ENCODE measurements at regions of chr16 and their contacts with region 1.

Region 1: DNA sequence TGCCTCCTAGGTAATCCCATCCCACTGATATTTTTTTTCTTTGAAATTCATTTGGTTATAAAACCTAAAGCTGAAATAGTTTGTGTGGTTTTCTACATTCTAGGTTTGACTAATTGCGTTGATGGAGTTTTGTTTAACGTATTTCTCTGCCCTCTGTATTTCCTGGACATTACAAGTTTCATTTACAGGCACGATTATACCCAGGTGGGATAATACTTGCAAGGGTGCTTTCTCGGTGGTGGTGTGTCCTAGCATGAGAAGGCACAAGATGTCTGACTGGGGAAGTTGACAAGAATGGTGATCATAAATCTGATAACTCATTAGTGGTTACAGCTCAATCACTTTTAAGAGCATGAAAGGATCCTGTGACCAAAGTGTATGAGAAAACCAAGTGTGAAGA is 45.0 kb downstream of the DYNLRB2 start:
- DNase-seq: no peak
- ATAC-seq: no peak
- H3K4me3 ChIP-seq: no peak overlapping the region
- H3K27ac ChIP-seq: no peak overlapping the region
- H3K4me1 ChIP-seq: no peaks in the 10 kb centered on the region
- H3K27me3 ChIP-seq: no peaks in the 10 kb centered on the region
- CTCF ChIP-seq: no peak
- POLR2A ChIP-seq: no peak

Region 2: DNA sequence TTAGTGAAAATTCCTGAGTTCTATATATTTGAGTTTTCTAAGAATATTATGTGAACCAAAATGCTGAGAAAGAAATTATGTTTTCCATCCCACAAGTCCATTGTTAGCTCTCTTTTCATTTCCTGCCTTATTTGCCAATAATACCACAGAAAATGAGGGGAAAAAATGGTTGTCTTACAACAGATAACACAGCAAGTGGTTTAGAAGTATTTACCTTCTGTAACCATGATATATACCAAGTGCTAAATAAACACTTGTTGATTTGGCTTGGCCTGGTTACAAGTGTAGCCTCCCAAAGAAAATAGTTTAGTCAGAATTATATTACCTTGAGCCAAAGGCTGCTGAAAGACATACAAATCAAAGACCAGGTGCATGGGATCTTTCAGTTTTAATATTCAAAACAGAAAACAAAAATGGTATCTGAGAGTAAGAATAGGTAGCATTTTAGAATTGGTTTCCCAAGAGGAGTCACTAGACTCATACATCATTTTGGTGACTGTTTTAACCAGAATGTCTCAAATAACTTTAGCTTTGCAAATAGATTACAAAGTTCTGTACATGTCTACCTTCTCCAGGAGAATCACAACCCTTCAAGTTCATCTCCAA is 484.8 kb before region 1 on chr16:
- intact Hi-C with region 1: no loop called
- DNase-seq: no peak
- ATAC-seq: no peak
- H3K4me3 ChIP-seq: no peak overlapping the region
- H3K27ac ChIP-seq: no peak overlapping the region
- H3K4me1 ChIP-seq: no peaks in the 10 kb centered on the region
- H3K27me3 ChIP-seq: no peaks in the 10 kb centered on the region
- CTCF ChIP-seq: no peak
- POLR2A ChIP-seq: no peak

Region 3: DNA sequence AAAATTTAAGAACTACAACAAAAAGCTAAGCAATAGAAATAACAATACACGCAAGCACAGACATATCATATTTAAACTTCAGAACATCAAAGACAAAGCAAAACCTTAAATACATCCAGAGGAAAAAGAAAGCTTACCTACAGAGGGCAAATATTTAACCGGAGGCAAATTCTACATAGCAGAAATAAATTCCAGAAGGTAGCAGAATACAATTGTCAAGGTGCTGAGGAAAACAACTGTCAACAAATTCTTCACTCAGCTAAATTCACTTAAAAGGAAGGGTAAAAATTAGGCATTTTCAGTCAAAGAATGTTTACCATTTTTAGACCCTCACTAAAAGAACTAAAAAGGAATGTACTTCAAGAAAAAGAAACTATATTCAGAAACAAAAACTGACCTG is 39.8 kb after region 1 on chr16:
- intact Hi-C with region 1: loop called in 1 of 10 experiments (anchors 2 kb)
- DNase-seq: no peak
- ATAC-seq: no peak
- H3K4me3 ChIP-seq: no peak overlapping the region
- H3K27ac ChIP-seq: no peak overlapping the region
- H3K4me1 ChIP-seq: peaks cover 0 to 3% (median 0%) of the 10 kb centered on the region in 12 donors
- H3K27me3 ChIP-seq: no peaks in the 10 kb centered on the region
- CTCF ChIP-seq: no peak
- POLR2A ChIP-seq: no peak

Measured in heart left ventricle (tissue), 16 donors.